ENCODE measurements at regions of chr19 and their contacts with region 1.

Region 1: GRCh38 chr19:17245244-17245984 is at the start of gene NR2F6:
- DNase-seq: no peak
- ATAC-seq: 0 out of 2 replicates have a peak, but pooled peaks have one; percentile 0
- H3K4me3 ChIP-seq: peak within 1 kb of the TSS; percentile 83 to 84
- H3K27ac ChIP-seq: peak within 1 kb of the TSS; percentile 91
- H3K4me1 ChIP-seq: peaks cover 49% of the 10 kb centered on the region
- H3K27me3 ChIP-seq: no peaks in the 10 kb centered on the region
- CTCF ChIP-seq: no peak
- total RNA-seq, gene NR2F6: 173 TPM

Region 2: DNA sequence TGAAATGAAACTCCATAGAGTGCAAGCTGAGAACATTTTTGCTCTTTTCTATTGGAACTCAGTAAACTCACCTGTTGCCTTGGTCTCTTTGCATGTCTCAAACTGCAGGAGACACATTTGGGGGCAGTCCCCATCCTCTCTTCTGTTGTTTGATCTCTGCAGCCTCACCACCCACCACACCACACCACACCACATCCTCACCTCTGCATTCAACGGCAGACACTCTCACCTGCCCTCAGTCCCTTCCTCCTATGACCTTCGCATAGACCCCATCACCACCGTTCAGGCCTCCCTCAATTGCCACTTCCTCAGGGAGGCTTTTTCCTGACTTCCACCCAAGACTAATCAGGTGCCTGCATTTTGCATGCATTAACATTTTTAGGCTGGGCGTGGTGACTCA is 1183.5 kb before region 1 on chr19:
- CTCF ChIA-PET with region 1: no interaction called
- POLR2A ChIA-PET with region 1: no interaction called
- in situ Hi-C with region 1: no loop called
- intact Hi-C with region 1: no loop called
- DNase-seq: no peak
- ATAC-seq: no peak
- H3K4me3 ChIP-seq: no peak overlapping the region
- H3K27ac ChIP-seq: no peak overlapping the region
- H3K4me1 ChIP-seq: peaks cover 2% of the 10 kb centered on the region
- H3K27me3 ChIP-seq: no peaks in the 10 kb centered on the region
- CTCF ChIP-seq: no peak

Region 3: DNA sequence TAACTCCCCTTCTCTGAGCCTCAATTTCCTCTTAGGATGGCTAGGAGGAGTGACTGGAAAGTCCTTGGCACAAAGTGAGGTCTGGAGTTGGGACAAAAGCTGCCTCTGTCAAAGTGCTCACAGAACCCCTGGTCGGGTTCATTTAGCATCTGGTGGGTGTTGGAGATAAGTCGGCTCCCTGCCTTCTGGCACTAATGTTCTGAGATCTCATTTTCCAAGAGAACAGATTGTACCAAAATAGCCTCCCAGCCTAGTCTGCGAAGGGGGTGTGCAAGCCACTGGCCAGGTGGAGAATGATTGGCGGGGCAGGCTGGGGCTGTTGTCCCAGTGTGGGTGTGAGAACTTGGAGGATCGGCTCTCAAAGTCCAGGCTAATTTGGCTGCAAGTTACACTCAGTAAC is 546.5 kb before region 1 on chr19:
- CTCF ChIA-PET with region 1: no interaction called
- POLR2A ChIA-PET with region 1: no interaction called
- in situ Hi-C with region 1: no loop called
- intact Hi-C with region 1: no loop called
- DNase-seq: no peak
- ATAC-seq: no peak
- H3K4me3 ChIP-seq: no peak overlapping the region
- H3K27ac ChIP-seq: no peak overlapping the region
- H3K4me1 ChIP-seq: no peaks in the 10 kb centered on the region
- H3K27me3 ChIP-seq: no peaks in the 10 kb centered on the region
- CTCF ChIP-seq: no peak

Region 4: DNA sequence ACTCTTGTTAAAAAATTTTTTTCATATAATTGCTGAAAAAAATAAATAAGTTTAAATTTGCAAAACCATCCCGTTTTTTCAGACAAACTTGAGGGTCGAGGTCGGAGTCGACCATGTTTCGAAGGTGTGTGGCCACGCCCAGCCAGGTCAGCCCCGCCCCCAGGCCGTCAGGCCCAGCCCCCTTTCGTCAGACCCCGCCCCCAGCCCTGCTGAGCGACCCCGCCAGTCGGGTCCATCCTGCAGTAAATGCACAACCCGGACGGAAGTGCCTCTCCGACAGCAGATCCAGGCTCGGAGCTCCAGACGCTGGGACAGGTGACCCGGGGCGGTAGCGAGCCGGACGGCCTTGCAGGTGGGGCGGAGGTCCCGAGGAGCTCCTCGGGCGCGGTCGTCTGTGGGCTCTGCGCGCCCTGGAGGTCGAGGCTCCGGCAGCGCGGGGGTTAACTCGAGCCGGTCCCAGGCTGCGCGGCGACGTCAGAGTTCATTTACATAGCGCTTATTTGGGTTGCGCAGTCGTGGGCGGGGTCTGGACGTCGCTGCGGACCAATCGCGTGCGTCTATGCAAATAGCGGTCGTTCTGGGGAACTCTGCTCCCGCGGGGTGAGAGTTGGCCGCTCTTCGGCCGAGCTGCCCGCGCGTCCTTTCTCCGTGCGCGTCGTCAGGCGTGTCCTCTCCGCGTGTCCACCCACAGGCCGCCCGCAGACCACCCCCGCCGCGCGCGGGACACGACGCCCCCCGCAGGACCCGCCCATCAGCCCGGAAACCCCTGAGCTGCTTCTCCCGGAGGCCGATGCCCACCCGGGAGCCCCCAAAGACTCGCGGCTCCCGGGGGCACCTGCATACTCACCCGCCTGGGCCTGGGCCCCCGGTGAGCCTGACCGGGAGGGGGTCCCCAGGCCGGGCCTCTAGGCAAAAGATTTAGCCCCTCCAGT is 19.1 kb before region 1 on chr19 and contains the start of gene OCEL1:
- CTCF ChIA-PET with region 1: no interaction called
- POLR2A ChIA-PET with region 1: no interaction called
- in situ Hi-C with region 1: no loop called
- intact Hi-C with region 1: no loop called
- DNase-seq: peak; percentile 73
- ATAC-seq: peak; percentile 91
- H3K4me3 ChIP-seq: peak within 1 kb of the TSS; percentile 61 to 76
- H3K27ac ChIP-seq: peak within 1 kb of the TSS; percentile 72
- H3K4me1 ChIP-seq: peaks cover 4% of the 10 kb centered on the region
- H3K27me3 ChIP-seq: no peaks in the 10 kb centered on the region
- CTCF ChIP-seq: no peak
- total RNA-seq, gene OCEL1: 37.1 TPM

Region 5: GRCh38 chr19:17260842-17261325 is 15.5 kb after region 1 on chr19:
- CTCF ChIA-PET with region 1: interaction called, 10 read pairs
- POLR2A ChIA-PET with region 1: interaction called, 3 read pairs
- in situ Hi-C with region 1: no loop called
- intact Hi-C with region 1: no loop called
- DNase-seq: peak; percentile 52
- ATAC-seq: peak; percentile 99
- H3K4me3 ChIP-seq: no peak overlapping the region
- H3K27ac ChIP-seq: peak overlapping the region; percentile 61; the same call in 1 of the 2 replicates
- H3K4me1 ChIP-seq: no peaks in the 10 kb centered on the region
- H3K27me3 ChIP-seq: no peaks in the 10 kb centered on the region
- CTCF ChIP-seq: peak; percentile 94

Region 6: GRCh38 chr19:17469481-17470067 is 224.2 kb after region 1 on chr19:
- CTCF ChIA-PET with region 1: no interaction called
- POLR2A ChIA-PET with region 1: interaction called, 10 read pairs
- in situ Hi-C with region 1: no loop called
- intact Hi-C with region 1: no loop called
- DNase-seq: peak; percentile 82
- ATAC-seq: peak; percentile 84
- H3K4me3 ChIP-seq: peak overlapping the region; percentile 58 to 77
- H3K27ac ChIP-seq: peak overlapping the region; percentile 79
- H3K4me1 ChIP-seq: peaks cover 6% of the 10 kb centered on the region
- H3K27me3 ChIP-seq: no peaks in the 10 kb centered on the region
- CTCF ChIP-seq: no peak

Region 7: GRCh38 chr19:17538684-17539237 is 293.3 kb after region 1 on chr19:
- CTCF ChIA-PET with region 1: no interaction called
- POLR2A ChIA-PET with region 1: no interaction called
- in situ Hi-C with region 1: no loop called
- intact Hi-C with region 1: no loop called
- DNase-seq: no peak
- ATAC-seq: peak; percentile 54
- H3K4me3 ChIP-seq: peak overlapping the region; percentile 47 to 59
- H3K27ac ChIP-seq: no peak overlapping the region
- H3K4me1 ChIP-seq: no peaks in the 10 kb centered on the region
- H3K27me3 ChIP-seq: no peaks in the 10 kb centered on the region
- CTCF ChIP-seq: no peak